ENCODE measurements at regions of chr17 and their contacts with region 1.

Region 1: DNA sequence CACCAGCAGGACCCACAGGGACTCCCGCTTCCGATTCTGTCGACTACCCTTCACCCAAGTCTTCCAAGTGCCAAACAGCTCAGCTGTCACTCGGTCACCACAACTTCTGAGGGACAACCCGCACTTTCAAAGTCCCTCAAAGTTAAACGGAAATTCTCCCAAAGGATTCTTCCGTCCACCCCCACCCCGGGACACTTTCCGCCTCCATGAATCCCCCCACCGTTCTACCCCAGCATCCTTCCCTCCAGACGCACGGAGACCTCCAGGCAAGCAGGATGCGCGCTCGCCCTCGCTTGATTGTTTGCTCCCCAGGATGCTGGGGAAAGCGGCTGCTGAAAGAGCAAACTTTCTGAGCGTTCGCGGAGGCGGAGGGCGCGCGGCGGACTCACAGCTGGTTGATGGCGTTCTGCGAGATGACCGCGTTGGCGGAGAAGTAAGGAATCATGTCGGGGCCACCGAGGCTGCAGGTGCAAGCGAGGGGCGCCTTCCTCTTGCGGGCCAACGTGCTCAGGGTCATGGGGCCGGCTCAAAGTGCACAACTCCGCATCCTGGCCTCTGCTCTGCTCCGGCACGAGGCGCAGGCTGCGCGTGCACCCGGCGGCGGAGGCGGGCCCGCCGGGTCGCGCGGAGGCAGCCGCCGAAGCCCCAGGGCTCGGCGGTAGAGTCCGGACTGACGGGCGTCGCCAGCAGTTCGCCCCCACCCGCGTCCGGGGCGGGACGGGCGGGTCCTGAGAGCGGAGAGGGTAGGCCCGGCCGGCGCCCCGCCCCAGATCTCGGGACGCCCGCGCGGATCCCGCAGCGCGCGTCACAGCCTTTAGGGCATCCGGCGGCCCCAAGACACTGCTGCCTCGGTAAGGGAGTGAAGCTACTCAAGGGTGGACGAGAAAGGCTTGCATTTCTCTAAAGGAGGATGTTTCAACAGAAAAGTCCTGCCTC is 138.3 kb upstream of the CORO6 start:
- DNase-seq: peak; percentile 97
- ATAC-seq: peak; percentile 89
- H3K4me3 Mint-ChIP-seq: peak overlapping the region; percentile 97
- H3K27ac Mint-ChIP-seq: peak overlapping the region; percentile 97
- H3K4me1 Mint-ChIP-seq: peaks cover 30% of the 10 kb centered on the region
- H3K27me3 Mint-ChIP-seq: no peaks in the 10 kb centered on the region

Region 2: GRCh38 chr17:29589524-29590410 is 171.3 kb before region 1 on chr17 and contains the start of gene GIT1:
- CTCF ChIA-PET with region 1: no interaction called
- POLR2A ChIA-PET with region 1: no interaction called
- intact Hi-C with region 1: loop called in 1 of 2 experiments (anchors 1 kb)
- DNase-seq: peak; percentile 92
- ATAC-seq: peak; percentile 69
- H3K4me3 Mint-ChIP-seq: peak within 1 kb of the TSS; percentile 94
- H3K27ac Mint-ChIP-seq: peak within 1 kb of the TSS; percentile 92
- H3K4me1 Mint-ChIP-seq: peaks cover 64% of the 10 kb centered on the region
- H3K27me3 Mint-ChIP-seq: no peaks in the 10 kb centered on the region
- total RNA-seq, gene GIT1: 60.5 to 74.1 TPM

Region 3: DNA sequence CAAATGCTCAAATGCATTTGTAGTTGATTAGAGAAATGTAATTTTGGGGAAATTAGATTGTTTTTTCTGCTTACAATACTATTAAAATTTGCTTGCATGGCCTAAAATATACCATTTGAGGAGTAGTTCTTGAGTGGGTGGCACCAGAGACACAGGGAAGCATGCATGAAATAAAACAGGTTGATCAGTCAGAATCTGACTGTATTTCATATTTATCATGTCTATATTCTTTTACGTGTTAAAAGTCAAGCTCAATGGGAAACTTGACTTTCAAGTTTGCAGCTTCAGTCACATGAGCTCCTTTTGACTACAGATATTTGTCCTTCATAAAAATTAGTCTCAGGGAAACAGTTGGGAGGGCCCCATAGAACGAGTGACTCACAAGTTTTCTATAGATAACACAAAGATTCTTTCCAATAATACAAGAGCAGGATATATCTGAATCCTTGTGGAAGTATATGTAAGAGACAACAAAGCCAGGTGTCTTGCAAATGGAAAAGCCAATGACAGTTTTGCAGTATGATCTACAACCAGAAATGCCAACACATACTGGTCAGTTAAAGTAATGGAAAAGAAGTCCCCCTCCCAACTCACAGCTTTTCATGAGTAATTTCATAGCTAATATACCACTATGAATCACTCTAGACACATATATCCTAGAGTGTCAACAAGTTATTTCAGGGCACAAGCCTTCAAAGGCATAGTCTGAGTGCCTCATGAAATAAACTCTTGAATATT is 96.1 kb before region 1 on chr17:
- CTCF ChIA-PET with region 1: interaction called, 10 read pairs
- POLR2A ChIA-PET with region 1: interaction called, 4 read pairs
- intact Hi-C with region 1: loop called in 1 of 2 experiments (anchors 2 kb)
- DNase-seq: peak; percentile 18
- ATAC-seq: peak; percentile 94
- H3K4me3 Mint-ChIP-seq: no peak overlapping the region
- H3K27ac Mint-ChIP-seq: peak overlapping the region; percentile 85
- H3K4me1 Mint-ChIP-seq: peaks cover 32% of the 10 kb centered on the region
- H3K27me3 Mint-ChIP-seq: no peaks in the 10 kb centered on the region

Region 4: DNA sequence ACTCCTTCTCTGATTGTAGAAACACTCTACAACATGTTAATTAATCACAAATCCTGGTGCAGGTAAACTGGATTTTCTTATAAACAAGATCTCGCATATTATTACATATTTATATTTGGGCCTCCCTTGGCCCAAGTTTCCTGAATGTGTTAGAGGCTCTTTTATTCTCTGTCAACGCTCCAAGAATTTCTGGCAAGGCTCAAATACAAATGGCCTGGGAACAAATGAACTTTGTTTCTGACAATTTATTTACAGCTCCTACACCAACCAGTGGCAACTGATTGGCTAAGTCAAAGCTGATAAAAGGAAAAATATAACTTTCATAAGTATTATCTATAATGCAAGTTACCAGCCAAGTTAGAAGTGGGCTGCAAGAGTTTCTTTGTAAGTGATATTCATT is 73.4 kb before region 1 on chr17:
- CTCF ChIA-PET with region 1: interaction called, 9 read pairs
- POLR2A ChIA-PET with region 1: interaction called, 4 read pairs
- intact Hi-C with region 1: loop called in 1 of 2 experiments (anchors 1 kb)
- DNase-seq: no peak
- ATAC-seq: no peak
- H3K4me3 Mint-ChIP-seq: no peak overlapping the region
- H3K27ac Mint-ChIP-seq: no peak overlapping the region
- H3K4me1 Mint-ChIP-seq: peaks cover 24% of the 10 kb centered on the region
- H3K27me3 Mint-ChIP-seq: no peaks in the 10 kb centered on the region

Region 5: DNA sequence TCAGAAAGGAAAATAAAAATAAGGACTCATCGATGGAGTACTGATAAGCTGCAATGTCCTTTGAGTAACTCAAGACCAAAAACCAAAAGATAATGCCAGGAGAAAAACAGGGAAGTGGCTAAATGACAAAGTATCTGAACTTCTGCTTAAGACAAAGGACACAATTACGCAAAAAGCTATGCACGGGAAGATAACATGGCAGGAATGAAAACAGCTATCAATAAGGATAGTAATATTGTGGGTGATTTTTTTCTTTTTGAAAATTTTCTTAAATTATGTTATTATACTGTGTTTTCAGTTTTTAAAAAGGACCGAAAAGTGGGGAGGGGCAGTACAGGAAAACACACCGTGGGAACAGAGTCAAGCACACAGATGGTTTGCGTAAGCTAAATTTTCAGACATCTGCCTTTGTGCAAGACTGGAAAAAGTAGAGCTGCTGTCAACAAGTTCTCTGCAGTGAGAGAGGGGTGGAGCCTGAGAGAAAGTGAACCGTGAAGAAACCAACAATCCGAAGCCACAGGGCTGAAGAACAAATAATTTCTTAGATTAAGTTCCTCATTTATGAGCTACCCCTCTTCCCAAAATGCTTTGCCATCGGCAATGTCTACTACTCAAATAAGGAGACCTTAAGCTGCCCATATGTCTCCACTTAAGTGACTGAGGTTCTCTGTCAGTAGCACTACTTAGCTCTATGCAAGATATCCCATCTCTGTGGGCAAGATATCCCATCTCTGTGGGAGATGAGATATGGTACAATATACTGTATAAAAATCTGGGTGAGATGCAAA is 38.4 kb before region 1 on chr17:
- CTCF ChIA-PET with region 1: interaction called, 3 read pairs
- POLR2A ChIA-PET with region 1: interaction called, 11 read pairs
- intact Hi-C with region 1: loop called (anchors 2 kb)
- DNase-seq: peak; percentile 38
- ATAC-seq: peak; percentile 50
- H3K4me3 Mint-ChIP-seq: peak overlapping the region; percentile 47
- H3K27ac Mint-ChIP-seq: peak overlapping the region; percentile 82
- H3K4me1 Mint-ChIP-seq: peaks cover 78% of the 10 kb centered on the region
- H3K27me3 Mint-ChIP-seq: no peaks in the 10 kb centered on the region

Region 6: DNA sequence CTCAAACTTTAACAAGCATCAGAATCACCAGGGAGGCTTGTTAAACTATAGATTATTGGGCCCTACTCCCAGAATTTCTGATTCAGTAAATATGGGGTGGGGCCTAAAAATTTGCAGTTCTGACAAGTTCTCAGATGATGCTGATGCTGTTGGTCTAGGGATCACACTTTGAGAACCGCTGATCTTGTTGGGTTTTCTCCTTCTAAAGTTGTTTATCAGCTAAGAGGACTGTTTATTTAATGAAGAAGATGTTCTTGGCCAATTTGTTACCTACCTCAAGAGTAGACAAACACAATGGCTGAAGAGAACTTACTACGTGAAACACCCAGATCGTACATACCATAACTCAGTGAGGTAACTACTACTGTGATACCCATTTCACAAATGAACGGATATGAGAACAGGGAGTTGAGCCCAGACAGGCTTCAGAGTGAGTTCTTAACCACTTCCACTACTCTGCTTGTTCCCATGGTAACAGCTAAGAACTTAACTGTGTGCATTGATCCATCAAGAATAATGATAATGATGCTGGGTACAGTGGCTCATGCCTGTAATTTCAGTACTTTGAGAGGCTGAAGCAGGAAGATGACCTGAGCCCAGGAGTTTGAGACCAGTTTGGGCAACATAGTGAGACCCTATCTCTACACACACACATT is 270.3 kb after region 1 on chr17:
- CTCF ChIA-PET with region 1: no interaction called
- POLR2A ChIA-PET with region 1: no interaction called
- intact Hi-C with region 1: no loop called
- DNase-seq: no peak
- ATAC-seq: peak; percentile 64
- H3K4me3 Mint-ChIP-seq: no peak overlapping the region
- H3K27ac Mint-ChIP-seq: no peak overlapping the region
- H3K4me1 Mint-ChIP-seq: no peaks in the 10 kb centered on the region
- H3K27me3 Mint-ChIP-seq: no peaks in the 10 kb centered on the region

Measured in activated CD4-positive, alpha-beta T cell treated with anti-CD3 and anti-CD28 coated beads for 36 hours (primary cell).